ENCODE measurements at regions of chr16 and their contacts with region 1.

Region 1: GRCh38 chr16:81723098-81723723 is 55.9 kb upstream of the PLCG2 start:
- DNase-seq: no peak
- ATAC-seq: peak; percentile 93 to 94

Region 2: GRCh38 chr16:81366316-81366932 is 356.8 kb before region 1 on chr16:
- intact Hi-C with region 1: loop called (anchors 2 to 10 kb)
- DNase-seq: no peak
- ATAC-seq: peak; percentile 30 to 68

Region 3: DNA sequence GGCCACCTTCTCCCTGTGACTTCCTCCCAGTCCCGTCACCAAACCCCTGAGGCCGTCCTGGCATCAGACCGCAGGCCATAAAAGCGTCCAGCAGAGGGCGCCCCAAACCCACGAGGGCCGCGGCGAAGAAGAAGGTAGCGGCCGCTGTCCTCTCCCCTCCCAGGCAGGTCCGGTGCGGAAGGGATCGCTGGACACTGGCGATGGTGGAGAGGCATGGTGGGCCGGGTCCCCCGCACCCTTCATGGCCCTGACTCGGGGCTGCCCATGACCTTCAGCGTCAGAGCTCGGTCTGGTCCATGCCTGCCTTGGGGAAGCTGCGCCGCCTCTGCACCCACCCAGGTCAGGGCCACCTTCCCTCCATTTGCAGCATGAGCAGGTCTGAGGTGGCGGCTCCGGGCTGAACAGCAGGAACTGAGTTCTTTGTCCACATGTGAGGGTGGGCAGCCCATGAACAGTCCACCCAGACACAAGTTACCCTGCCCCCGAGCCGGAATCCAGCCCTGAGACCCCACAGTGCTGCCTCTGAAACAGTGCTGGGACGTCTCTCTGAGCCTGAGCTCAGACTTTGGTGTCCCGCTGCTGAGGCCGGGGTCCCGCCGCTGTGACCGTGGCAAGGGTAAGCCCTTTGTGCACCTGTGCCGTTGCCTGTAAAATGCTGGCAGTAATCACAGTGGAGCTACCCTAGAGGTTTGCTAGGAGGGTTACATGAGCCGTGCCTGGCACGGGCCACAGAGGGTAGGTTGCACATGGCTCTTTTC is 319.4 kb before region 1 on chr16:
- intact Hi-C with region 1: loop called (anchors 1 to 5 kb)
- DNase-seq: peak; percentile 88
- ATAC-seq: peak; percentile 90 to 93

Region 4: GRCh38 chr16:81623363-81624102 is 99.7 kb before region 1 on chr16:
- intact Hi-C with region 1: loop called (anchors 5 kb)
- DNase-seq: no peak
- ATAC-seq: no peak